SK-N-SH (cell line): ENCODE measurements at regions of chr3 and their contacts with region 1.

Region 1: DNA sequence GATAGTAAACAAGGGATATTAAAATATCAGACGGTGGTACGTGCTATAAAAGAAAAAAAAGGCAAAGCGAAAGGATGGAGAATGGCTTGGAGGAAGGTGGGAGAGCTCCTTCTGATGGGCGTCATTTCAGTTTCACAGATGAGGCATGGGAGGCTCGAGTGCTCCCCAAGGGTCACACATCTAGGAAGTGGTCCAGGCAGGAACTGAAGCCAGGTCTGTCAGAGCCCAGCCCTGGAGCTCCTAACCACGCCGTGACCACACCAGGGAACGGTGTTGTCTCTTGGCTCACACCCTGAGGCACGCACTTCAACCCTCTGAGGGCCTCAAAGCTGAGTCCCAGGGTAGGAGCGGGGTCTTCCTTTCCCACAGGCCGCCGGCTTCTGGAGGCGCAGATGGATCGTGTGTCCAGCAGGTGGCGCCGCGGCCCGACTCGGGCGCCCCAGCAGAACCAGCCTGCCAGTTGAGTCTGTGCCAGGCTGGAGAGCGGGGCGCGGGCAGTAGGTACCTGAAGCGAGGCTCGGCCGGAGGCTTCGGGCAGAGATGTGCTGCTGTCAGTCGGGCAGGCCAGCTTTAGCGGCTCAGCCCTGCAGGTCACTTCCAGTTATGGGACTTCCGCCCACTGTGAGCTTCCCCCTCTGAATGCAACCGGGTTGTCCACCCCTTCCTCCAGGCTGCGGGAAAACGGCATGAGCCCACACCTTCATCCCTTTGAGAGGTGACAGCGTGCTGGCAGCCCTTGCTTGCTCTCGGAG is 68.1 kb downstream of the SLC6A1 start:
- DNase-seq: peak; percentile 89
- H3K4me3 ChIP-seq: peak overlapping the region; percentile 51 to 88
- H3K27ac ChIP-seq: peak overlapping the region in 1 of 2 experiments; percentile 37; a peak in 1 of 4 replicates
- H3K4me1 ChIP-seq: peaks cover 0 to 9% of the 10 kb centered on the region in 2 experiments; a peak in 1 of 4 replicates
- H3K27me3 ChIP-seq: no peaks in the 10 kb centered on the region
- CTCF ChIP-seq: peak; percentile 87
- EP300 ChIP-seq: no peak
- RAD21 ChIP-seq: peak; percentile 79

Region 2: DNA sequence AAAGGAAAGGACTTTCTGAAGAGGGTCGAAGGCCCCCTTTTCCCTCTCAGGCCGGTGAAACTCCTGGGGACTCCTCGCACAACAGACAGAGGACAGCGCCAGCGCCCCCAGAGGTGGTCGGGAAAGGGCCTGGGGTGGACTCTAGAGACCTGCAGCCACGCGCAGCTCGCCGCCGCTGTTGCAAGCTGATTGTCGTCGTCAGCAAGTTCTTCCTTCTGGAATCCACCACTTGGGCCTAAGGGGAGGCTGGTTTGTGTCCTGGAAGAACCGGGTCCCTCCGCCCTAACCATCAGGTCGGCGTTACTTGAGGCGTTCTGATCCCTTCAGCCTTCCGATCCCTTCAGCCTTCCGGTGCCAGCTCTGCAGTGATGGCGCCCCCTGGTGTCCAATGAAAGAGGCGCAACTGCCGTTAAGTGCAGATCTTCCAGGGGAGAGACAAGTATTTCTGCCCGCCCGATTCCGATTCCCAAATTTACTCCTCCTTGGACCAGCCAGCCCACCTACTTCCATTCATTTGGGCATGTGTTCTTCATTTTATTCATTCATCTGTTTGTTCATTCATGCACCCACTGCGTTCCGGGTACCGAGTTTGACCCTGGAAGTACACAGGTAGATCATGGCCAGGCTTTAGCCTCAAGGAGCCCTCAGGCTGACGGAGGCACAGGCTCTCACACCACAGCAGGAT is 321.8 kb before region 1 on chr3:
- CTCF ChIA-PET with region 1: interaction called, 21 read pairs
- POLR2A ChIA-PET with region 1: no interaction called
- DNase-seq: peak; percentile 81
- H3K4me3 ChIP-seq: peak overlapping the region; percentile 45 to 59; a peak in 3 of 4 replicates
- H3K27ac ChIP-seq: no peak overlapping the region
- H3K4me1 ChIP-seq: peaks cover 0 to 5% of the 10 kb centered on the region in 2 experiments; a peak in 1 of 4 replicates
- H3K27me3 ChIP-seq: no peaks in the 10 kb centered on the region
- CTCF ChIP-seq: peak; percentile 84
- EP300 ChIP-seq: no peak
- RAD21 ChIP-seq: peak; percentile 71

Region 3: DNA sequence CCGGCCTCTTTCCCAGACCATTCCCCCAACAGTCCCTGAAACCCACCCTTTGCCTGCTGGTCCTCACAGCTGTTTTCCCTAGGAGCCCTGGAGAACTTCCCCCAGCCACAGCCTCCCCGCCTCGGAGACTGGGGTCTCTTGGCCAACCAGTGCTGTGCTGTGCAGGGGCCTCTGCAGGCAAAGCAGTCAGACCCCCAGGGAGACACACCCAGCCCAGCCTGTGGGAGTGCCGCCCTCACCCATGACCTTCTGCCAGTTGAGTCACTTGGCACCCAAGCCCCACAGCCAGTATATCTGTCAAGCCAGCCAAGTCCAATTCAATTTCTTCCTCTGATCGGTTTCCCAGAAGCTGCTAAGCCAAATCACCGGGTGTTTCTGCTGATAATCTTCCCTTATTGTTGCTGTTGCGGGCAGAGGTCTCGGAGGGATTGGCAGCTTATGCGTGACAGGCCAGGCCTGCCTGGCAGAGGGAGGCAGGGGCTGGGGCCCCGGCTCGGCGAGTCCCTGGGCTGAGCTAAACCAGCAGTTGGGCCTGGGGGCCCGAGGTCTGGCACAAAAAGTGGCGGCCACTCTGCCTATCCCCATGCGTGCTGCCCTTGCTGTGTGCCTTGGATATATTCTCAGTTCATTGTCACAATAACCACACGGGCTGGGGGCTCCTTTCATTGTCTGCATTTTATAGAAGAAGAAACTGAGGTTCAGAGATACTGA is 133.7 kb before region 1 on chr3:
- CTCF ChIA-PET with region 1: interaction called, 18 read pairs
- POLR2A ChIA-PET with region 1: no interaction called
- DNase-seq: no peak
- H3K4me3 ChIP-seq: no peak overlapping the region
- H3K27ac ChIP-seq: peak overlapping the region in 1 of 2 experiments; percentile 79; a peak in 2 of 4 replicates
- H3K4me1 ChIP-seq: peaks cover 0 to 34% of the 10 kb centered on the region in 2 experiments; a peak in 1 of 4 replicates
- H3K27me3 ChIP-seq: no peaks in the 10 kb centered on the region
- CTCF ChIP-seq: no peak
- EP300 ChIP-seq: no peak
- RAD21 ChIP-seq: no peak

Region 4: DNA sequence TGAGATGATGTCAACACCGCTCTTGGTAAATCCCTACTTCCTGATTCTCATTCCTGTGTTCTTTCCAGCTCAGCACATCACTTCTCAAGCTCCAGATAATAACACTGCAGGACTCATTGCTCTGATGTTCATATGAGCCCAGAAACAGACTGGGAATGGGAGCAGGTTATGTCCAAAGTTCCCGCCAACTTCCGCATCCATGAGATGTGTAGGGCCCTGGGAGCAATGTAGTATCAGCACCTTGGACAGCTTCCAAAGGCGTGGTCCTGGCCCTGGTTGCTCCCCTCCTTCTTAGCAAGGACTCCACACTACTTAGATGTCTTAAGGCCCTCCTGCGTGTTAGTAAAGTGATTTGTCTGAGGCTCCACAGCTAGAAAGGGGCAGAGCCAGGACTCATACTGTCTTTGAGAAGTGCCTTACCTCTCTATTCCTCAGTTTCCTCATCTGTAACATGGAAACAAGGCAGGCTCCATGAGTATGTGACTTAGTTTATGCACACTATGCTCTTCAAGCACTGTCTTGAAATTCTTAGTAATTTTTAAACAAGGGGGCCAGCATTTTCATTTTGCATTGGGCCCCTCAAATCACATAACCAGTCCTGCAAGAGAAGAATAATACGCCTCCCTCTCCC is 96.0 kb before region 1 on chr3:
- CTCF ChIA-PET with region 1: interaction called, 74 read pairs
- POLR2A ChIA-PET with region 1: no interaction called
- DNase-seq: no peak
- H3K4me3 ChIP-seq: no peak overlapping the region
- H3K27ac ChIP-seq: no peak overlapping the region
- H3K4me1 ChIP-seq: peaks cover 0 to 7% of the 10 kb centered on the region in 2 experiments; a peak in 1 of 4 replicates
- H3K27me3 ChIP-seq: no peaks in the 10 kb centered on the region
- CTCF ChIP-seq: no peak
- EP300 ChIP-seq: no peak
- RAD21 ChIP-seq: no peak

Region 5: GRCh38 chr3:11001020-11001656 is 59.5 kb before region 1 on chr3:
- CTCF ChIA-PET with region 1: interaction called, 11 read pairs
- POLR2A ChIA-PET with region 1: no interaction called
- DNase-seq: peak; percentile 64
- H3K4me3 ChIP-seq: no peak overlapping the region
- H3K27ac ChIP-seq: no peak overlapping the region
- H3K4me1 ChIP-seq: peaks cover 0 to 9% of the 10 kb centered on the region in 2 experiments; a peak in 1 of 4 replicates
- H3K27me3 ChIP-seq: peaks cover 23% of the 10 kb centered on the region
- CTCF ChIP-seq: no peak
- EP300 ChIP-seq: no peak
- RAD21 ChIP-seq: no peak

Region 6: DNA sequence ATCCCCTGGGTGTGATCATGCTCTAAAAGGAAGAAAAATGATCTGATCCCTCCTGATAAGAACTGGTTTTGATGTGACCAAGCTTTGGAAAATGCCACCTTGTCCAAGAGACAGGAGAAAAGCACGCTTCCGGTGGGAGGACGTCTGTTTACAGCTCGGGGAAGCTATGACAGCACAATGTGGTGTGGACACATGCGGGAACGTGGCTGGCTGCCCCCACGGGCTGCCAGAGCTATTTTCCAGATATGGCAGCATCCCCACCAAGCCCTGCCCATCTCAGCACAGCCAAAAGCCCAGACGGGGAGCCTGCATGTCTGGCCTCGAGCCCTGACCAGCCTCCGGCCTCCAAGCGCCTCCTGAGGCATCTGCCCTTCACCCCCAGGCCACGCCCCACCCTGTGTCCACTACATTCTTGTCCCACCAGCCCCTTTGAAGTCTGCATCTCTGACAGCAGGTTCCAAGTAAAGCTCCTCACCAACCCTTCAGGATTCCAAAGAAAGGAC is 30.5 kb after region 1 on chr3:
- CTCF ChIA-PET with region 1: interaction called, 44 read pairs
- POLR2A ChIA-PET with region 1: no interaction called
- DNase-seq: no peak
- H3K4me3 ChIP-seq: no peak overlapping the region
- H3K27ac ChIP-seq: no peak overlapping the region
- H3K4me1 ChIP-seq: peaks cover 5 to 9% of the 10 kb centered on the region in 2 experiments; a peak in 1 of 4 replicates
- H3K27me3 ChIP-seq: no peaks in the 10 kb centered on the region
- CTCF ChIP-seq: no peak
- EP300 ChIP-seq: no peak
- RAD21 ChIP-seq: no peak

Region 7: GRCh38 chr3:11201246-11202024 is 140.8 kb after region 1 on chr3:
- CTCF ChIA-PET with region 1: interaction called, 32 read pairs
- POLR2A ChIA-PET with region 1: no interaction called
- DNase-seq: no peak
- H3K4me3 ChIP-seq: no peak overlapping the region
- H3K27ac ChIP-seq: peak overlapping the region; percentile 73 to 94
- H3K4me1 ChIP-seq: peaks cover 29 to 36% of the 10 kb centered on the region in 2 experiments
- H3K27me3 ChIP-seq: no peaks in the 10 kb centered on the region
- CTCF ChIP-seq: no peak
- EP300 ChIP-seq: peak in 1 of 2 experiments; percentile 70; a peak in 2 of 4 replicates
- RAD21 ChIP-seq: no peak